PC-9 (cell line): ENCODE measurements at regions of chr15 and their contacts with region 1.

Region 1: DNA sequence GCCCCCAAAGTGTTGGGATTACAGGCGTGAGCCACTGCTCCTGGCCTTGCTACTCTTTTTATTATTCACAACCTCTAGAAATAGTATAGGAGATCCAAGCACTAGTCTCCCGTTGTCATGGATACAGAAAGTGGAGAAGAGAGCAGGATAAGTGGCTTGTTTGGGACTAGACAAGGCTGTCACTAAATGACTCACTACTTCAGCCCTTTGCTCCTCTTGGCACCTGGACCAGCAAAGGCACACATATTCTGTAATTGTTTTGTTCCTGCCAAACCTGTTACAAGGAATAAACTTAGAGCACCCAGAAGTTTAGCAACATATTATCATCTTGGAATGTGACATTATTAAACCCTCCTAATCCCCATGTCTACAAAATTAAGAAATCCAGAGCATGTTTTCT is 427.2 kb upstream of the THBS1 start:
- DNase-seq: peak; percentile 43 to 89
- H3K4me3 ChIP-seq: no peak overlapping the region
- H3K27ac ChIP-seq: peak overlapping the region; percentile 65
- H3K4me1 ChIP-seq: peaks cover 25% of the 10 kb centered on the region
- H3K27me3 ChIP-seq: no peaks in the 10 kb centered on the region
- CTCF ChIP-seq: no peak

Region 2: GRCh38 chr15:39140060-39140604 is 13.6 kb before region 1 on chr15:
- CTCF ChIA-PET with region 1: no interaction called
- POLR2A ChIA-PET with region 1: interaction called, 13 read pairs
- intact Hi-C with region 1: no loop called
- DNase-seq: peak; percentile 51 to 73
- H3K4me3 ChIP-seq: no peak overlapping the region
- H3K27ac ChIP-seq: peak overlapping the region; percentile 66
- H3K4me1 ChIP-seq: peaks cover 24% of the 10 kb centered on the region
- H3K27me3 ChIP-seq: no peaks in the 10 kb centered on the region
- CTCF ChIP-seq: no peak